ENCODE measurements at regions of chr2 and their contacts with region 1.

Region 1: DNA sequence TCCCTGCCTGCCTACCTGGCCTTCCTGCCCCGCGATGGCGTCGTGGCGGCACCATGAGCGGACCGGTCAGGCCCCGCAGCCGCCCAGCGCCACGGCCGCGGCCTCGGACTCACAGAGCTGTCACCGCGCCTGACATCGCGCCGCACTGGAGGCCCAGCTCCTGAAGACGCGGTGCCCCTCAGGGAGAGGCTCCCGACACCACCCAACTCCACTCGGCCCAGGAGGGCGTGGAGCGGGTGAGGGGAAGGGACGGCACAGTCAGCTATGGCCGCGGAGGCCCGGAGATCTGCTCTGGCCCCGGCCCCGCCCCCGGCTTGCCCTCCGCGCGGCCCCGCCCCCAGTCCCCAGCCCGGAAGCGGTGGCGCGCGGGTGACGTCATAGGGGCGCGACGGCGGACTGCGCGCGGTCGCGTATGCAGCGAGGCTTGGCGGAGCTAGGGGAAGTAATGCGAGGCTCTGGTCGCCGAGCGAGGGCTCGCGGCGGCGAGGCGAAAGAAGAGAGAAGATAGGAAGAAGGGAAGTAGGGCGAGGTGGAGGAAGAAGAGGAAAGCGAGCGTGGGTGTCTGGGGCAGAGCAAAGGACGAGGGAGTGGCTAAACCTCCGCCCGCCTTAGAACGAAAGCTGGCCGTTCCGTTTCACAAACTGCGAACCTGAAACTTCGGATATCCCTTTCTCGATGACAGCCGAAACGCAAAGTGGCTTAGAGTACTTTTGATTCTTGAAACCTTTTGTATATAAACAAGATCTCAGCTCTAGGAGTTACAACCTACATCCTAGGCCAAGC is at the start of gene SLC35F5:
- DNase-seq: peak; percentile 100
- ATAC-seq: peak; percentile 83
- H3K4me3 Mint-ChIP-seq: peak within 1 kb of the TSS; percentile 88
- H3K27ac Mint-ChIP-seq: peak within 1 kb of the TSS; percentile 96
- H3K4me1 Mint-ChIP-seq: peaks cover 38% of the 10 kb centered on the region
- H3K27me3 Mint-ChIP-seq: no peaks in the 10 kb centered on the region
- CTCF ChIP-seq: no peak
- total RNA-seq, gene SLC35F5: 34.3 and 48.3 TPM in 2 replicates

Region 2: DNA sequence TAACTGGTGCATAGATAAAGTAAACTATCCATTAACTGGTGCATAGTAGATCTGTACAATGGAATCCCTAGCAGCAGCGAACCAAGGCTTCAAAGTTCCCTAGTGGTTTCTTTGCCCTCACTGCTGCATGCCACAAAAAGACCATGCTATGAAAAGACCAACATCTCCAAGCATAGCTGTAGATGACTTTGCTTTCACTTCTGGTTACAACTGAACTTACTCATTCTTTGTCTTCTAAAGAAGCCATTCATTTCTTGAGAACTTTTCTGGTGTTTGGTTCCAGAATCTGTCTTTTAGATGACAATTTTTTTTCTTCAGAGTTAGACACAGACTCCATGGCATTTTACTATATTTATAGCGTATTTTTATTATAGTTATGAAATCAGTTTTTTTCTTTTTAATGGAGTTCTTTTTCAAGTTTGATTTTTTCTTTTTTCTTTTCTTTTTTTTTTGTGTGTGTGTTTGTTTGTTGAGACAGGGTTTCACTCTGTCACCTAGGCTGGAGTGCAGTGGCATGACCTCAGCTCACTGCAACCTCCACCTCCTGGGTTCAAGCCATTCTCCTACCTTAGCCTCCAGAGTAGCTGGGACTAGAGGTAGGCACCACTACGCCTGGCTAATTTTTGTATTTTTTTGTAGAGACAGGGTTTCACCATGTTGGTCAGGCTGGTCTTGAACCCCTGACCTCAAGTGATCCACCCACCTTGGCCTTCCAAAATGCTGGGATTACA is 63.7 kb before region 1 on chr2:
- CTCF ChIA-PET with region 1: no interaction called
- POLR2A ChIA-PET with region 1: interaction called, 3 read pairs
- intact Hi-C with region 1: loop called (anchors 2 kb)
- DNase-seq: no peak
- ATAC-seq: peak; percentile 77
- H3K4me3 Mint-ChIP-seq: peak overlapping the region; percentile 58
- H3K27ac Mint-ChIP-seq: peak overlapping the region; percentile 63
- H3K4me1 Mint-ChIP-seq: peaks cover 57% of the 10 kb centered on the region
- H3K27me3 Mint-ChIP-seq: no peaks in the 10 kb centered on the region
- CTCF ChIP-seq: no peak

Region 3: DNA sequence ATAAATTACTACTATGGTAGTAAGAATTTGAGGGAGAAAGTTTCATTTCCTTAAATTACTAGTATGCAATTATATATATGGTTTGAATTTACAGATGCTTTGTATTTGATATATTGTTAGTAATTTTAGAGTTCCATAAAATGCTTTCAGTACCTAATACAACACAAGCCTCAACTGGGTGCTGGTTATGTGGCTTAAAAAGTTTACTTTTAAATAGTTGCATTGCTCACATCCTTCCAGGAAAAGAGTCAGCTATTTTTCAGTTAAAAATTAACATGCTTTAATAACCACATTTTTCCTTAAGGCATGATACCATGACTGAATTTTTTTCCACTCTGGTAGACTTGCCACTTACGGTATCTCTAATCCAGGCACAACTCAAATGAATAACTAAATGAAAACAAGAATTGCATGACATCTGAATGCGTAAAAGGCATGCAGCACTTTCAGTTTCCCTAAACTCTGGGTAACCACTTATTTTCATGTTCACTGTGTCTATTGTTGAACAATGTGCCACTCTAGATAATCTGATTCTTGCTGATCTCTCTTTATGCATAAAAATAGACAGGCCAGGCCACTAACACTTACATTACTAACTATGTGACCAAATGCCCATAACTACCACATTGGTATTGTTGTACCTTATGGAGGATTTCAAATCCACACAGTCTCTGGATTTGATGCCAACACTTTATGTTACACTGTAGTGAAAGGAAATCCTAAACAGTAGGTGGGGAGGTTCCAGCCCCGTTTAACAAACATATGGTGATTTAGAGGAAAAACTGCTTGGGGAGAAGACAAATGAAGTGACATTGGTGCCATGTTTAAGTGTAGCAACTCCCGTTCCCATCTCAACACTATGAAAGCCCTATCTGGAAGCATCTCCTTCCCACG is 35.4 kb after region 1 on chr2:
- CTCF ChIA-PET with region 1: no interaction called
- POLR2A ChIA-PET with region 1: interaction called, 19 read pairs
- intact Hi-C with region 1: loop called (anchors 1 kb)
- DNase-seq: no peak
- ATAC-seq: peak; percentile 77
- H3K4me3 Mint-ChIP-seq: peak overlapping the region; percentile 36
- H3K27ac Mint-ChIP-seq: peak overlapping the region; percentile 33
- H3K4me1 Mint-ChIP-seq: peaks cover 28% of the 10 kb centered on the region
- H3K27me3 Mint-ChIP-seq: no peaks in the 10 kb centered on the region
- CTCF ChIP-seq: no peak

Region 4: GRCh38 chr2:113889471-113890252 is 133.1 kb after region 1 on chr2 and contains the start of gene ACTR3:
- CTCF ChIA-PET with region 1: interaction called, 3 read pairs
- POLR2A ChIA-PET with region 1: interaction called, 191 read pairs
- intact Hi-C with region 1: loop called (anchors 1 kb)
- DNase-seq: peak; percentile 96
- ATAC-seq: peak; percentile 79
- H3K4me3 Mint-ChIP-seq: peak within 1 kb of the TSS; percentile 98
- H3K27ac Mint-ChIP-seq: peak within 1 kb of the TSS; percentile 99
- H3K4me1 Mint-ChIP-seq: peaks cover 84% of the 10 kb centered on the region
- H3K27me3 Mint-ChIP-seq: no peaks in the 10 kb centered on the region
- CTCF ChIP-seq: no peak
- total RNA-seq, gene ACTR3: 638 and 639 TPM in 2 replicates

Region 5: GRCh38 chr2:113901943-113902342 is 145.4 kb after region 1 on chr2:
- CTCF ChIA-PET with region 1: no interaction called
- POLR2A ChIA-PET with region 1: interaction called, 13 read pairs
- intact Hi-C with region 1: no loop called
- DNase-seq: no peak
- ATAC-seq: peak; percentile 63
- H3K4me3 Mint-ChIP-seq: peak overlapping the region; percentile 53
- H3K27ac Mint-ChIP-seq: peak overlapping the region; percentile 50
- H3K4me1 Mint-ChIP-seq: peaks cover 99% of the 10 kb centered on the region
- H3K27me3 Mint-ChIP-seq: no peaks in the 10 kb centered on the region
- CTCF ChIP-seq: no peak

Region 6: DNA sequence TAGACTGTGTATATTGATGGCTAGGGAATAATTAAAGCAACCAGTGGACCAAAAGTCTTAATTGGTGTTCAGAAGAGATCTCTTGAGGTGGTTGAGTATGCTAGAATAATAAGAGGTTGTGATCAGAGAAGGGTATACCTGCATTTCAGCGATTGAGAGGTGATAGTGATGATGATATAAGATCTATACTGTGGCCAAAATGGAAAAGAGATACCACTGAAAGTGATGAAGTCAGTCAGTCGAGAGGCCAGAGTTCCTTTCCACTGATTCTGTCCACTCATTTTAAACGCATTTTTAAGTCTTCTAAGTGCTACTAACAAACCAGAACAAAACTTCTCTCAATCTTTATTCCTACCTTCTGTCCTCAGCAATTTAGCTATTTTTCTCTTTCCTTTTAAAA is 166.2 kb after region 1 on chr2:
- CTCF ChIA-PET with region 1: no interaction called
- POLR2A ChIA-PET with region 1: interaction called, 11 read pairs
- intact Hi-C with region 1: loop called (anchors 1 kb)
- DNase-seq: no peak
- ATAC-seq: no peak
- H3K4me3 Mint-ChIP-seq: no peak overlapping the region
- H3K27ac Mint-ChIP-seq: no peak overlapping the region
- H3K4me1 Mint-ChIP-seq: peaks cover 26% of the 10 kb centered on the region
- H3K27me3 Mint-ChIP-seq: no peaks in the 10 kb centered on the region
- CTCF ChIP-seq: no peak

Region 7: GRCh38 chr2:114699423-114699944 is 942.9 kb after region 1 on chr2:
- CTCF ChIA-PET with region 1: no interaction called
- POLR2A ChIA-PET with region 1: no interaction called
- intact Hi-C with region 1: no loop called
- DNase-seq: no peak
- ATAC-seq: no peak
- H3K4me3 Mint-ChIP-seq: no peak overlapping the region
- H3K27ac Mint-ChIP-seq: no peak overlapping the region
- H3K4me1 Mint-ChIP-seq: no peaks in the 10 kb centered on the region
- H3K27me3 Mint-ChIP-seq: peaks cover 3% of the 10 kb centered on the region
- CTCF ChIP-seq: no peak

Measured in activated B cell treated with CpG ODN at 0.5 μM for 24 hours (primary cell).